ENCODE measurements at regions of chr22 and their contacts with region 1.

Region 1: DNA sequence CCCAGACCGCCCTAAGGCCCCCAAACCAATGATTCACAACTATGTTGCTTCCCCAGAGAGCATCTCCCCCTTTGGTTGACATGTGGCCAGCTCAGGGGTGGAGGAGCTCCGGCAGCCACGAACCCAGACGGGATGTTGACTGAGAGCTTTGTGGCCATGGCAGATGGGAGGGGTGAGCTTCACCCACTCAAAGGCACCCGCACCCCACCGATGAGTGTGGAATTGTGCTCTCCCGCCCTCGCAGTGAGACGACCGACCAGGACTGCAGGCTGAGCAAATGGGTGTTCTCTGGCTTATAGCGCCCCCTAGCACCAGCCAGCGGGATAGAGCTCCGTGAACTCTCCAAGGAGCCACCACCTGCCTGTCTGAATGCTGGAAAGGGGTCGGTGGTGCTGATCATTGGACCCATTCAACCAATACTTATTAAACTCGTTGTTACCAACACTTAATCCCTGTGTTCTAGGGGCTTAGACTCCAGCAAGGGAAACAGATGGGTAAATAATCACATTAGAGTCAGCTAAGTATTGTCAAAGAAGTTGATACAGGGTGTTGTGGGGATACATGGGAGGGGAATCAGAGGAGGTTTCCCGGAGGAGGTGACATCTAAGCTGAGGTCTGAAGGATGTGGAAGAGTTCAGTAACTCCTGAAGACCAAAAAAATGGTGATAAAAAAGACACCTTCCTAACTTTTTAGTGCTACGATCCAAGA is 4.5 kb upstream of the TIMP3 start:
- DNase-seq: peak in 1 of 2 experiments; percentile 84
- H3K4me3 ChIP-seq: no peak overlapping the region
- H3K27ac ChIP-seq: no peak overlapping the region
- H3K4me1 ChIP-seq: peaks cover 0 to 2% (median 1%) of the 10 kb centered on the region in 4 experiments; a peak in 3 of 7 replicates
- H3K27me3 ChIP-seq: peaks cover 0 to 8% (median 6%) of the 10 kb centered on the region in 4 experiments; a peak in 3 of 7 replicates
- CTCF ChIP-seq: peak; percentile 84 to 95 (median 94)
- EP300 ChIP-seq: no peak
- POLR2A ChIP-seq: no peak
- RAD21 ChIP-seq: peak; percentile 91 to 95

Region 2: GRCh38 chr22:32534252-32535240 is 262.5 kb before region 1 on chr22:
- CTCF ChIA-PET with region 1: interaction called, 102 read pairs
- POLR2A ChIA-PET with region 1: interaction called, 3 read pairs
- DNase-seq: no peak
- H3K4me3 ChIP-seq: no peak overlapping the region
- H3K27ac ChIP-seq: no peak overlapping the region
- H3K4me1 ChIP-seq: no peaks in the 10 kb centered on the region; a peak in 1 of 7 replicates
- H3K27me3 ChIP-seq: no peaks in the 10 kb centered on the region
- CTCF ChIP-seq: no peak
- EP300 ChIP-seq: no peak
- POLR2A ChIP-seq: no peak
- RAD21 ChIP-seq: no peak

Region 3: DNA sequence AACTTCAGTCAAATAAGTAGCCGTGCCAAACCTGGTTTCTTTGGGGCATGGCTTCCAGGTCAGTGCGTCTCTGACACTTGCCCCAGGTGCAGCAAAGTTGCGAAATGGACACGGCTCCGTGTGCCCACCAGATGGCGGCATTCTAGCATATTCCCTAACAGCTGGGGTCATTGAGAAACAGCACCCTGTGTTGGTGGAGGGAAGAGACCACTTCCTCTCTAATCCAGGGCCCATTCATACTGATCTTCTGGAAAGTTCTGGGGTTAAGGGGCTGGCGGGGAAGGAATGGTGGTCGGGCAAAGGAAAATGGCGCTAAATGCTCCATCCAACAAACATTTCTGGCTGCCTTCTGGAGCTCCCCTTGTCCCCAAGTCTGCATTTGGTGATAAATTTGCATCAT is 136.7 kb before region 1 on chr22:
- CTCF ChIA-PET with region 1: interaction called, 167 read pairs
- POLR2A ChIA-PET with region 1: no interaction called
- DNase-seq: peak; percentile 36 to 80
- H3K4me3 ChIP-seq: no peak overlapping the region
- H3K27ac ChIP-seq: no peak overlapping the region
- H3K4me1 ChIP-seq: no peaks in the 10 kb centered on the region
- H3K27me3 ChIP-seq: no peaks in the 10 kb centered on the region; a peak in 3 of 7 replicates
- CTCF ChIP-seq: peak; percentile 85 to 91 (median 88)
- EP300 ChIP-seq: no peak
- POLR2A ChIP-seq: no peak
- RAD21 ChIP-seq: peak; percentile 82 to 84

Region 4: DNA sequence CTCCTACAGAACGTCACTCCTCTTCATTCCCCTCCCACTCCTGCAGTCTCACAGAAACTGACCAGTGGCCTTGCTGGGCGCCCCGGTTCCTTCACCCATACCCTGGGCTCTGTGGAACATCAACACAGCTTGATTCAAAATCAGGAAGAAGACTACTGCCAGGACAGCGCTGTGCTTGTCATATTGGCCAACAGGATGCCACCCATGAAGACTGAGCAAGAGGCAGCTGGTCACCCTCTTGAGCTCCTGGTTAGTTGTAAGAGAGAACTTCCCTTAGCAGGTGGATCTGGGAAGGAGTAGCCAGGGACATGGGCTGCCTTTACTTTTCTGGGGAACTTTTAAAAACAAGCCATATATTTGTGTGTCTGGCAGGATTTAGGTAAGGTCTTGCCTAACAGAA is 105.9 kb before region 1 on chr22:
- CTCF ChIA-PET with region 1: no interaction called
- POLR2A ChIA-PET with region 1: no interaction called
- DNase-seq: no peak
- H3K4me3 ChIP-seq: no peak overlapping the region
- H3K27ac ChIP-seq: no peak overlapping the region
- H3K4me1 ChIP-seq: no peaks in the 10 kb centered on the region
- H3K27me3 ChIP-seq: no peaks in the 10 kb centered on the region
- CTCF ChIP-seq: no peak
- EP300 ChIP-seq: no peak
- POLR2A ChIP-seq: no peak
- RAD21 ChIP-seq: no peak

Region 5: GRCh38 chr22:32737811-32738497 is 59.1 kb before region 1 on chr22:
- CTCF ChIA-PET with region 1: interaction called, 12 read pairs
- POLR2A ChIA-PET with region 1: no interaction called
- DNase-seq: no peak
- H3K4me3 ChIP-seq: no peak overlapping the region
- H3K27ac ChIP-seq: no peak overlapping the region
- H3K4me1 ChIP-seq: no peaks in the 10 kb centered on the region
- H3K27me3 ChIP-seq: peaks cover 0 to 3% (median 0%) of the 10 kb centered on the region in 4 experiments; a peak in 1 of 7 replicates
- CTCF ChIP-seq: no peak
- EP300 ChIP-seq: no peak
- POLR2A ChIP-seq: no peak
- RAD21 ChIP-seq: no peak

Region 6: GRCh38 chr22:32781695-32782094 is 15.3 kb before region 1 on chr22:
- CTCF ChIA-PET with region 1: interaction called, 72 read pairs
- POLR2A ChIA-PET with region 1: interaction called, 3 read pairs
- DNase-seq: no peak
- H3K4me3 ChIP-seq: no peak overlapping the region
- H3K27ac ChIP-seq: no peak overlapping the region
- H3K4me1 ChIP-seq: peaks cover 0 to 4% (median 3%) of the 10 kb centered on the region in 4 experiments; a peak in 3 of 7 replicates
- H3K27me3 ChIP-seq: no peaks in the 10 kb centered on the region
- CTCF ChIP-seq: no peak
- EP300 ChIP-seq: no peak
- POLR2A ChIP-seq: no peak
- RAD21 ChIP-seq: no peak

Region 7: GRCh38 chr22:33012833-33013450 is 215.9 kb after region 1 on chr22:
- CTCF ChIA-PET with region 1: no interaction called
- POLR2A ChIA-PET with region 1: no interaction called
- DNase-seq: no peak
- H3K4me3 ChIP-seq: no peak overlapping the region
- H3K27ac ChIP-seq: no peak overlapping the region
- H3K4me1 ChIP-seq: no peaks in the 10 kb centered on the region
- H3K27me3 ChIP-seq: no peaks in the 10 kb centered on the region
- CTCF ChIP-seq: peak in 1 of 3 experiments; percentile 43; a peak in 1 of 4 replicates
- EP300 ChIP-seq: no peak
- POLR2A ChIP-seq: no peak
- RAD21 ChIP-seq: no peak

Measured in H1 (cell line).